Ascending aorta (tissue), 2 donors: ENCODE measurements at regions of chr6 and their contacts with region 1.

Region 1: GRCh38 chr6:83192871-83193746 is at the starts of genes PGM3 and RWDD2A:
- DNase-seq: peak; percentile 75 to 95
- H3K4me3 ChIP-seq: peak within 1 kb of the TSS; percentile 59 to 93
- H3K27ac ChIP-seq: peak within 1 kb of the TSS; percentile 87 to 92
- H3K4me1 ChIP-seq: peaks cover 0 to 19% of the 10 kb centered on the region in 2 donors
- H3K27me3 ChIP-seq: no peaks in the 10 kb centered on the region
- CTCF ChIP-seq: peak in 1 of 3 experiments; percentile 8
- total RNA-seq, gene PGM3: 17.9 TPM
- total RNA-seq, gene RWDD2A: 3.5 TPM

Region 2: GRCh38 chr6:82247634-82248232 is 945.4 kb before region 1 on chr6 and contains the start of gene IBTK:
- intact Hi-C with region 1: loop called (anchors 5 kb)
- DNase-seq: peak; percentile 72 to 97
- H3K4me3 ChIP-seq: peak within 1 kb of the TSS; percentile 92
- H3K27ac ChIP-seq: peak within 1 kb of the TSS; percentile 96
- H3K4me1 ChIP-seq: peaks cover 0 to 9% of the 10 kb centered on the region in 2 donors
- H3K27me3 ChIP-seq: no peaks in the 10 kb centered on the region
- CTCF ChIP-seq: no peak
- total RNA-seq, gene IBTK: 8.8 TPM

Region 3: GRCh38 chr6:82363351-82364086 is 829.6 kb before region 1 on chr6 and contains the start of gene TPBG:
- intact Hi-C with region 1: loop called (anchors 10 kb)
- DNase-seq: peak in 1 of 2 donors; percentile 74
- H3K4me3 ChIP-seq: peak within 1 kb of the TSS; percentile 63 to 93
- H3K27ac ChIP-seq: peak within 1 kb of the TSS; percentile 89 to 93
- H3K4me1 ChIP-seq: peaks cover 4 to 9% of the 10 kb centered on the region in 2 donors
- H3K27me3 ChIP-seq: no peaks in the 10 kb centered on the region
- CTCF ChIP-seq: peak in 1 of 3 experiments; percentile 42
- total RNA-seq, gene TPBG: 60.1 TPM

Region 4: GRCh38 chr6:83008663-83009062 is 184.4 kb before region 1 on chr6:
- intact Hi-C with region 1: no loop called
- DNase-seq: no peak
- H3K4me3 ChIP-seq: no peak overlapping the region
- H3K27ac ChIP-seq: no peak overlapping the region
- H3K4me1 ChIP-seq: no peaks in the 10 kb centered on the region
- H3K27me3 ChIP-seq: no peaks in the 10 kb centered on the region
- CTCF ChIP-seq: no peak

Region 5: GRCh38 chr6:83067448-83068413 is 125.4 kb before region 1 on chr6 and contains the start of gene DOP1A:
- intact Hi-C with region 1: loop called (anchors 2 kb)
- DNase-seq: peak; percentile 75 to 97
- H3K4me3 ChIP-seq: peak within 1 kb of the TSS; percentile 66 to 95
- H3K27ac ChIP-seq: peak within 1 kb of the TSS; percentile 87 to 93
- H3K4me1 ChIP-seq: peaks cover 0 to 8% of the 10 kb centered on the region in 2 donors
- H3K27me3 ChIP-seq: no peaks in the 10 kb centered on the region
- CTCF ChIP-seq: peak; percentile 82 to 99 (median 98)
- total RNA-seq, gene DOP1A: 13.2 TPM

Region 6: GRCh38 chr6:83086751-83087150 is 106.4 kb before region 1 on chr6:
- intact Hi-C with region 1: no loop called
- DNase-seq: no peak
- H3K4me3 ChIP-seq: no peak overlapping the region
- H3K27ac ChIP-seq: no peak overlapping the region
- H3K4me1 ChIP-seq: no peaks in the 10 kb centered on the region
- H3K27me3 ChIP-seq: no peaks in the 10 kb centered on the region
- CTCF ChIP-seq: no peak

Region 7: GRCh38 chr6:83859410-83860358 is 666.6 kb after region 1 on chr6 and contains the start of gene CYB5R4:
- intact Hi-C with region 1: loop called (anchors 10 kb)
- DNase-seq: peak; percentile 71 to 97
- H3K4me3 ChIP-seq: peak within 1 kb of the TSS; percentile 77 to 83
- H3K27ac ChIP-seq: peak within 1 kb of the TSS; percentile 84 to 85
- H3K4me1 ChIP-seq: peaks cover 4 to 15% of the 10 kb centered on the region in 2 donors
- H3K27me3 ChIP-seq: no peaks in the 10 kb centered on the region
- CTCF ChIP-seq: peak; percentile 40 to 63 (median 49)
- total RNA-seq, gene CYB5R4: 0.53 TPM

Region 8: DNA sequence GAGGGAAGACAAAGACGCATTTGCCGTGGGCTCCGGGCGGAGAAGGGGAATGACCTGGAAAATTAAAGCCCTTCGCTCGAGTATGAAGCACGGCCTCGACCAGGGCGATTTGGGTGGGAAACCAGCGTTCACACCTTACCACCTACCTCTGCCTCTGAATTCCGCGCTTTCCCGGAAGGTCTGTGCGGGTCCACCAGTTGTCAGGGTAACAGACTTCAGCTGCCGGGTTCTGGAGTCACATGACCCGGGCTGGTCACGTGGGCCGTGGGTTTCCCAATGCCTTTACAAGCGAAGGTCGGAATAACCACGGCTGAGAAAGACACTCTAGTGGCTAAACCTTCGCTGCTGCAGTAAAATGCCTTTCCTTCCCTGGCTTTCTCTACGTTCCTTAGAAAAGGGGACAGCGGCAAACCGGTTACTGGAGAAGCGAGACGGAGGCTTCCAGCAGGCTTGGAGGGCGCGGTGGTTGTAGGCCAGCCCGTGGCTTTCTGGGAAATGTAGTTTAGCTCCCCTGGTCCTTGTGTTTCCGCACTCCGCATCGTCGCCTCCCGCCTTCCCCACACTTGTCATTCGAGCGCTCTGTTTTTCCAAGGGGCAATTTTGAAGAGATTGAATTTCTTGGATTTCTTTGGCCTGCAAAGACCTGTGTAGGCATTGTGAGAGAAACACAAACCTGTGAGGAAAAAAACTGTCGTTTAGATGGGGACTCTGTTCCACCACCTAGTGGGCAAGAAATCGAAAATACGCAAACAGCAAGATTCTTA is 1034.5 kb after region 1 on chr6 and contains the start of gene CEP162:
- intact Hi-C with region 1: loop called (anchors 10 kb)
- DNase-seq: peak; percentile 77 to 96
- H3K4me3 ChIP-seq: peak within 1 kb of the TSS; percentile 90 to 96
- H3K27ac ChIP-seq: peak within 1 kb of the TSS; percentile 76 to 77
- H3K4me1 ChIP-seq: no peaks in the 10 kb centered on the region
- H3K27me3 ChIP-seq: no peaks in the 10 kb centered on the region
- CTCF ChIP-seq: peak; percentile 72 to 82 (median 77)
- total RNA-seq, gene CEP162: 11.7 TPM

Region 9: DNA sequence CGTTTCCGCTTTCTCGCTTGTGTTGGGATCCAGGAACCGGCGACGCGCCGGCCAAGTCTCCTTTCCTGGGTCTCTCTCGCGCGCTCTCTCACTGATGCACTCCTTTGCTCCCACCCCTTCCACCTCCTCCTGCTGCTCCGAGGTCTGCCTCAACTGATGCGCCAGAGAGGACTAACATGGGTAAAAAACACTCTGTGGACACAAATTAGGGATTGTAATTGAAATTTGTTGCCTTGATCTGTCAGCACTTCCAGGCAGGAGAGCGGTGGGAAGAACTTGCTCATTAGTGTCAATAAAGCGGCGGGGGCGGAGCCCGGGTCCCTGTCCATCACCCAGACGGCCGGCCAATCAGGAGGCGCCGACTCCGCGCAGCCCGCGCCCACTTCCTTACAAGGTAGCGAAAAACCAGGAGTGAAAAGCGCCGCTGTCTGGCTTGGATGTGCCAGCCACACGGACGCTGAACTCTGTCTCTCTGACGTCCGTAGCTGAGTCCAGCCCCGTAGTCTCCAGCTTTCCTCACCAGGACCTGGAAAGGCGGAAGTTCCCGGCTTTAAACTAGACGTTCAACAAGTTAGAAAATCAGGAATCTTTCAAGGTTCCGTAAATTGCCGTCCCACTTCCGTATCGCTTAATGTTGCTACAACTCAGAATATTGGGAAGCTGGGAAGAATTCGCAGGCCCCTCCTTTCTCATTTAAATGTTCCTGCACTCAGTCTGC is 1571.4 kb after region 1 on chr6 and contains the start of gene TBX18:
- intact Hi-C with region 1: loop called (anchors 10 kb)
- DNase-seq: peak; percentile 94 to 99
- H3K4me3 ChIP-seq: peak within 1 kb of the TSS; percentile 56 to 100
- H3K27ac ChIP-seq: peak within 1 kb of the TSS; percentile 98 to 100
- H3K4me1 ChIP-seq: no peaks in the 10 kb centered on the region
- H3K27me3 ChIP-seq: no peaks in the 10 kb centered on the region
- CTCF ChIP-seq: no peak
- total RNA-seq, gene TBX18: 81.0 TPM